ENCODE measurements at regions of chr14 and their contacts with region 1.

Region 1: GRCh38 chr14:52741865-52742264 is 11.9 kb downstream of the STYX start:
- DNase-seq: peak in 1 of 3 donors; percentile 6
- H3K4me3 ChIP-seq: peak overlapping the region; percentile 3 to 62 (median 37)
- H3K4me3 Mint-ChIP-seq: peak overlapping the region; percentile 7 to 72
- H3K27ac ChIP-seq: peak overlapping the region; percentile 72 to 97
- H3K27ac Mint-ChIP-seq: peak overlapping the region; percentile 90 to 97 (median 95)
- H3K4me1 ChIP-seq: peaks cover 22 to 26% of the 10 kb centered on the region in 2 donors
- H3K4me1 Mint-ChIP-seq: peaks cover 21% of the 10 kb centered on the region
- H3K27me3 ChIP-seq: no peaks in the 10 kb centered on the region
- H3K27me3 Mint-ChIP-seq: no peaks in the 10 kb centered on the region
- CTCF ChIP-seq: no peak

Region 2: GRCh38 chr14:52640137-52640536 is 101.7 kb before region 1 on chr14:
- intact Hi-C with region 1: no loop called
- DNase-seq: no peak
- H3K4me3 ChIP-seq: no peak overlapping the region
- H3K4me3 Mint-ChIP-seq: no peak overlapping the region
- H3K27ac ChIP-seq: no peak overlapping the region
- H3K27ac Mint-ChIP-seq: no peak overlapping the region
- H3K4me1 ChIP-seq: no peaks in the 10 kb centered on the region
- H3K4me1 Mint-ChIP-seq: no peaks in the 10 kb centered on the region
- H3K27me3 ChIP-seq: no peaks in the 10 kb centered on the region
- H3K27me3 Mint-ChIP-seq: no peaks in the 10 kb centered on the region
- CTCF ChIP-seq: no peak

Region 3: DNA sequence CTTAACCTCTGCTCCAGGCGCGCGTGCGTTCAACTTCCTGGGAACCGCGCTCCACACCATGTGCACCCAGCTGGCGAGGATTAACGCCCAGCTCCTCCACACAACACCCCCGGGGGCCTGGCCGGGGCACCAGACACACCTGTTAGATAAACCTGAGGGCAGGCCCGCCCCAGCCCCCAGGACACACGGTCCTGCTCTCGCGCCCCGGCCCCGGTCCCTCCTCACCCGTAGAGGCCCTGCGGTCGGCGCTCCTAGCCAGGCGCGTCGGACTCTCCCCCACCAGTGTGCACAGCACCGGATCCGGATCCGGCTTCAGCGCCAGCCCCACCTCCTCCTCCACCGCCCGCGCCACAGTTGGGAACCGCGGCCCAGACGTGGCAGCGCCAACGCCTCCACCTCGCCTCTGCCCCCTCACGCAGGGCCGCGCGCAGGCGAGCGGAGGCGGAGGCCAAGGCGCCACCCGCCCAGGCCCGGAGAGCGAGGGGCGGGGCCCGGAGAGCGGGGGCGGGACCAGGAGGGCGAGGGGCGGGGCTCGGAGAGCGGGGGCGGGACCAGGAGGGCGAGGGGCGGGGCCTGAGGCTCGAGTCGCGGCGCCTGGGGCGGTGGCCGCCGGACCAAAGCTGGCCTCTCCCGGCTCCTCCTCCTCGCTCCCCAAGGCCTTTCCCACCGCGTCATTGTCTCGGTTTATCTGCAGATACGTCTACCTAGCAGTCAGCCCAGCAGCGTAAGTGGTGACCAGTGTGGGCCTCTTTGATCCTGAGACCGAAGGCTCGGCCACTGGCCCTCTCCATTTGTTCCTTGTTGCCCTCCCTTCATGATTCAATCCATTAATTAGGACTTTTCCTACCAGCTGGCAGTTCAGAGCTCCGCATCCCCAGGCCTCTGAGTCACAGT is 49.6 kb after region 1 on chr14 and contains the start of gene GNPNAT1:
- intact Hi-C with region 1: loop called (anchors 10 kb)
- DNase-seq: peak; percentile 73 to 78 (median 73)
- H3K4me3 ChIP-seq: peak within 1 kb of the TSS; percentile 57 to 90 (median 84)
- H3K4me3 Mint-ChIP-seq: peak within 1 kb of the TSS; percentile 92 to 94
- H3K27ac ChIP-seq: peak within 1 kb of the TSS; percentile 24 to 64
- H3K27ac Mint-ChIP-seq: peak within 1 kb of the TSS; percentile 71 to 92 (median 82)
- H3K4me1 ChIP-seq: peaks cover 14 to 24% of the 10 kb centered on the region in 2 donors
- H3K4me1 Mint-ChIP-seq: peaks cover 18% of the 10 kb centered on the region
- H3K27me3 ChIP-seq: no peaks in the 10 kb centered on the region
- H3K27me3 Mint-ChIP-seq: peaks cover 1 to 12% (median 2%) of the 10 kb centered on the region in 3 donors
- CTCF ChIP-seq: no peak
- polyA plus RNA-seq, gene GNPNAT1: 1.1 to 3.1 (median 1.9) TPM

Region 4: DNA sequence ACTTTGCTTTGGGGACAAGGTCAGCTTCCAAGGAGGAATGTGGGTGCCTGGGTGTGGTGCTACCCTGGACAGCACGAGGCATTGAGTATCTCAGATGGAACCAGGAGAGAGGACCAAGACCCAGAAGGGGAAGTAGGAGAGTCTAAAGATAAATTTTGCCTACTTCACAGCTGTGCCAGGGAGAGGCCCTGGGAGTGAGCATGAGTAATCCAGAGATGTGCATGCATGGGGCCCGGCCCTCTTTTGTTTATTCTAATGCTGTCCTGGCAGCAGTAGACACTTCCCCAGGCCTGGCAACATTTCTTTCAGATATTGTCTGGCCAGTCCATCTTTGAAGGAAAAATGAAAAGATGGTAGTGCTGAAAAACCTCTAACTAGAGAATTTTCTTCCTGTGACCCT is 99.1 kb after region 1 on chr14:
- intact Hi-C with region 1: no loop called
- DNase-seq: peak in 1 of 3 donors; percentile 8
- H3K4me3 ChIP-seq: no peak overlapping the region
- H3K4me3 Mint-ChIP-seq: no peak overlapping the region
- H3K27ac ChIP-seq: no peak overlapping the region
- H3K27ac Mint-ChIP-seq: peak overlapping the region in 1 of 7 donors; percentile 3
- H3K4me1 ChIP-seq: no peaks in the 10 kb centered on the region
- H3K4me1 Mint-ChIP-seq: peaks cover 7% of the 10 kb centered on the region
- H3K27me3 ChIP-seq: no peaks in the 10 kb centered on the region
- H3K27me3 Mint-ChIP-seq: no peaks in the 10 kb centered on the region
- CTCF ChIP-seq: no peak